ENCODE measurements at regions of chr15 and their contacts with region 1.

Region 1: DNA sequence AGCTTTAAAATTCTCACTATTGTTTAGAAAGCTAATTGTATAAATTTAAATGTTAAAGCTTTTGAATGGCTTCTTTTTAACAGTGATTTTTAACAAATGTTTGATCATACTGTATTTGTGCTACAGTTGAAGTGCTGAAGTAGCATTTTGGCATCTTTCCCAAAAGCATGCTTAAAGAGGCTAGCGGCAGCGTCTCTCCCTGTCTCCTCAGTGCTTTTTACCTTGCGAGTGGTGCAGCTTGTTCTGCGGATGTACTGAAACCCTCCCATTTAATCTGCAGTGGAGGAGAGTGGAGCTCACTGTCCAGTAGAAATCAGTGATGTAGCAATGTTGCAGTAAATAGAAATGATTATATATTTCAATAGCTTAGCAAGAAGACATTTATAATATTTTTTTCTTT is 43.7 kb downstream of the LRRC49 start:
- DNase-seq: peak; percentile 21
- ATAC-seq: no peak
- H3K4me3 ChIP-seq: no peak overlapping the region
- H3K27ac ChIP-seq: no peak overlapping the region
- H3K4me1 ChIP-seq: no peaks in the 10 kb centered on the region
- H3K27me3 ChIP-seq: no peaks in the 10 kb centered on the region
- CTCF ChIP-seq: no peak
- POLR2A ChIP-seq: no peak
- RAD21 ChIP-seq: no peak

Region 2: DNA sequence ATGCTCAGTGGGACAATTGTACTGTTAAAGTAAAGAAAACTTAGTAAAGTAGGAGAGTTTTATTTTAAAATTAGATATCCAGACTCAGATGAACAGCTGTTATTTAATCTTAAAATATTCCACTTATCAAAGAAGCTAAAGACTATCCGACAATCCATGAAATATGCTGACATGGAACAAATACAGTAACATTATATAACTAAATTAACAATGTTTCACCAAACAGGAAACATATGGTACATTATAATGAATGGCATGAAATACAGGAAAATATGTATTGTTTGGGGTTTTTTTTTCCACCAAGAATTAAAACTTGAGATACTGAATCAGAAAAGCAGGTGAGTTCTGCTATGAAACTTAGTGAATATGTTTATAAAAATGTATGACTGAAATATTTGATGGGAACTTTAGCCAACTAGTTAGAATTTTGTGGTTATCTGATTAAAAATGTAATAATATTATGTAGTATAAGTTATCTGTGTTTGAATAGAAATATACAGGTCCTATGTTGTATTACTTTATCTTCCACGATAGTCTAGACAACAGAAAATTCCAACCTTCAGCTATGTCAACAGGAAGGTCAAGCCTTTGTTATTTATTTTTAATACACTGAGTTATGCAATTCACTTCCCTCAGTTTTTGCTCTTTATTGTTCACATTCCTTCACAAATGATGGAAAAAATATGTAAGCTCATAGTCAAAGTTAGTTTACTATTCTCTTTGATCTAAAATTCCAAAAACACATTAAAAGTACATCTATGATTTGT is 245.7 kb before region 1 on chr15:
- CTCF ChIA-PET with region 1: no interaction called
- POLR2A ChIA-PET with region 1: no interaction called
- dilution Hi-C with region 1: no loop called
- in situ Hi-C with region 1: no loop called
- intact Hi-C with region 1: no loop called
- DNase-seq: no peak
- ATAC-seq: no peak; the same call in 1 of the 2 replicates
- H3K4me3 ChIP-seq: no peak overlapping the region
- H3K27ac ChIP-seq: no peak overlapping the region
- H3K4me1 ChIP-seq: peaks cover 6% of the 10 kb centered on the region
- H3K27me3 ChIP-seq: no peaks in the 10 kb centered on the region
- CTCF ChIP-seq: no peak
- POLR2A ChIP-seq: no peak
- RAD21 ChIP-seq: no peak

Region 3: DNA sequence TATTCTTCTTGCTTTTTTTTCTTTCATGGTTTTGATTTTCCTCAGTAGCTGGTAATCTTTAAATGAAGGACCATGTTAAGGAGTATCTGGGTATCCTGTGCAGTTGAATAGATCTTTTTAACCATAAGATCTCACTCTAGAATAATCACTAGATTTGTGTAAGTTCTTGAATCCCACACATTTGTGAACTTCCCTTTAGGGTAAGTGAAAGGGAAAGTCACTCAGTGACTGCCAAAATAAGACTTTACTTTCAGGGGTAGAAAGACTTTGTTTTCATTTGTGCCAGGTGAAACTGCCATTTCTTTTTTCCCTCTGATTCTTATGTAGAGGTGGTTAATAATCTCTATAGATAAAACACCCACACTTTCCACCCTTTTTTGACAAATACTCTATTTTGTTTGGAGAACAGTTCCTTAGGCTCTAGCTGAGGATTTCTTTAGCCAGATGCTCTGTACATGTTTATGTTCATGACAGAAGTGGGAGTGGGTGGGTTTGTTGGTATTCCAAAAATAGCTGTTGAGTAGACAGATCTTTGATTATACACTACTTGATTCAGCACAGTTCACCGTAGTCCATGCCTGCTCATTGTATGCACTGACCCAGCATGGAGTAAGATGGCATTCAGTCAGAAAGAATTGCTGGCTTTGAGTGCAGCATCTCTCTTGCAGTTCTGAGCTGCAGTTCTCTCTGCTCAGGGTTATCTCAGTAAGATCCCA is 15.2 kb before region 1 on chr15:
- CTCF ChIA-PET with region 1: no interaction called
- POLR2A ChIA-PET with region 1: interaction called, 12 read pairs
- dilution Hi-C with region 1: no loop called
- in situ Hi-C with region 1: no loop called
- intact Hi-C with region 1: no loop called
- DNase-seq: peak; percentile 76
- ATAC-seq: peak; percentile 83
- H3K4me3 ChIP-seq: no peak overlapping the region
- H3K27ac ChIP-seq: no peak overlapping the region
- H3K4me1 ChIP-seq: peaks cover 2% of the 10 kb centered on the region; the same call in 1 of the 2 replicates
- H3K27me3 ChIP-seq: no peaks in the 10 kb centered on the region
- CTCF ChIP-seq: no peak
- POLR2A ChIP-seq: no peak
- RAD21 ChIP-seq: no peak

Measured in IMR-90 (cell line).